Naive thymus-derived CD4-positive, alpha-beta T cell (primary cell): ENCODE measurements at regions of chr17 and their contacts with region 1.

Region 1: GRCh38 chr17:59106463-59107305 is at the start of gene TRIM37:
- DNase-seq: peak; percentile 96 to 100 (median 99)
- ATAC-seq: peak; percentile 98
- H3K4me3 ChIP-seq: peak within 1 kb of the TSS; percentile 69
- H3K4me3 Mint-ChIP-seq: peak within 1 kb of the TSS; percentile 80 to 97 (median 94)
- H3K27ac ChIP-seq: peak within 1 kb of the TSS; percentile 83
- H3K27ac Mint-ChIP-seq: peak within 1 kb of the TSS; percentile 63 to 98 (median 90)
- H3K4me1 ChIP-seq: peaks cover 11 to 26% of the 10 kb centered on the region in 2 donors
- H3K4me1 Mint-ChIP-seq: peaks cover 15 to 57% (median 39%) of the 10 kb centered on the region in 7 donors
- H3K27me3 ChIP-seq: no peaks in the 10 kb centered on the region
- H3K27me3 Mint-ChIP-seq: no peaks in the 10 kb centered on the region
- total RNA-seq, gene TRIM37: 13.1 to 25.2 (median 22.4) TPM

Region 2: GRCh38 chr17:58006924-58007780 is 1099.5 kb before region 1 on chr17 and contains the start of gene SRSF1:
- CTCF ChIA-PET with region 1: no interaction called
- POLR2A ChIA-PET with region 1: no interaction called
- intact Hi-C with region 1: loop called (anchors 2 kb)
- DNase-seq: peak; percentile 95 to 99 (median 98)
- ATAC-seq: peak; percentile 92
- H3K4me3 ChIP-seq: peak within 1 kb of the TSS; percentile 99
- H3K4me3 Mint-ChIP-seq: peak within 1 kb of the TSS; percentile 96 to 100 (median 99)
- H3K27ac ChIP-seq: peak within 1 kb of the TSS; percentile 93
- H3K27ac Mint-ChIP-seq: peak within 1 kb of the TSS; percentile 99 to 100 (median 99)
- H3K4me1 ChIP-seq: peaks cover 31 to 32% of the 10 kb centered on the region in 2 donors
- H3K4me1 Mint-ChIP-seq: peaks cover 33 to 60% (median 54%) of the 10 kb centered on the region in 7 donors
- H3K27me3 ChIP-seq: no peaks in the 10 kb centered on the region
- H3K27me3 Mint-ChIP-seq: peaks cover 0 to 3% (median 0%) of the 10 kb centered on the region in 5 donors
- total RNA-seq, gene SRSF1: 115 to 362 (median 249) TPM

Region 3: DNA sequence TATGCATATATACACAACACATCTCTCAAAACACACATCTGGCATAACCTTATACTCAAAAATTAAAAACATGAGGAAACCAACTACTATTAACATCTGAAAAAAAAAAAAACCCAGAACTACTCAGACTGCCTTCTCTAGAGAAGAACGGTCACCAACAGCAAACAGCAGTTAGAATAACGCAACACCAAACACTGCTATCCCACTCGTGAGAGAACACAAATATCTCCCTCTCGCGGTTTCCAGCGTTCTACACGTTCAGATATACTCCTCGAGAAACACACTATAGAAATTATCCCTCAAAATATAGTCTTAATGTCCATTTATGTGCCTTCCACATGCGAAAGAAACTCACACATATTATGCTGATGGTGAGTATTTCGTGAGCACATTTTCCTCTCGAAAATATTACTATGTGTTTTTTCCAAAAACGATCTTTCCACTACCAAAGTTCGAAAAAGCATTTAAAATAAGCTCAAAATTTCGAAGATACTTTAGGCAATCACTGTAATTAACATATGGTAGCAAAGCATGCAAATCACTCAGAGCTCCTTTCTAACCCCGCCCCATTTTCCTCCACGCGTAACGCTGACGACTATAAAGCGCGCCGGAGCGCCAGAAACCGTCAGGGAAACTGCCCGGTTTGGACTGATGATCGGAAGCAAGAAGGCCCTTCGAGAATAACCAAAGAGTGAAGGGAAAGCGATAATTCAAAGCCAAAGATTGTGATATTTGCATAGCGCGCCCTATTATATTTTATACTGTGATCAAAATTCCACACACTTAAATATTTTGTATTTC is 475.0 kb before region 1 on chr17:
- CTCF ChIA-PET with region 1: no interaction called
- POLR2A ChIA-PET with region 1: interaction called, 4 read pairs
- intact Hi-C with region 1: loop called (anchors 1 kb)
- DNase-seq: peak; percentile 74 to 95 (median 92)
- ATAC-seq: peak; percentile 90
- H3K4me3 ChIP-seq: peak overlapping the region; percentile 46
- H3K4me3 Mint-ChIP-seq: no peak overlapping the region
- H3K27ac ChIP-seq: peak overlapping the region; percentile 78
- H3K27ac Mint-ChIP-seq: no peak overlapping the region
- H3K4me1 ChIP-seq: peaks cover 6 to 12% of the 10 kb centered on the region in 2 donors
- H3K4me1 Mint-ChIP-seq: peaks cover 0 to 9% (median 5%) of the 10 kb centered on the region in 7 donors
- H3K27me3 ChIP-seq: no peaks in the 10 kb centered on the region
- H3K27me3 Mint-ChIP-seq: peaks cover 0 to 2% (median 0%) of the 10 kb centered on the region in 5 donors

Region 4: DNA sequence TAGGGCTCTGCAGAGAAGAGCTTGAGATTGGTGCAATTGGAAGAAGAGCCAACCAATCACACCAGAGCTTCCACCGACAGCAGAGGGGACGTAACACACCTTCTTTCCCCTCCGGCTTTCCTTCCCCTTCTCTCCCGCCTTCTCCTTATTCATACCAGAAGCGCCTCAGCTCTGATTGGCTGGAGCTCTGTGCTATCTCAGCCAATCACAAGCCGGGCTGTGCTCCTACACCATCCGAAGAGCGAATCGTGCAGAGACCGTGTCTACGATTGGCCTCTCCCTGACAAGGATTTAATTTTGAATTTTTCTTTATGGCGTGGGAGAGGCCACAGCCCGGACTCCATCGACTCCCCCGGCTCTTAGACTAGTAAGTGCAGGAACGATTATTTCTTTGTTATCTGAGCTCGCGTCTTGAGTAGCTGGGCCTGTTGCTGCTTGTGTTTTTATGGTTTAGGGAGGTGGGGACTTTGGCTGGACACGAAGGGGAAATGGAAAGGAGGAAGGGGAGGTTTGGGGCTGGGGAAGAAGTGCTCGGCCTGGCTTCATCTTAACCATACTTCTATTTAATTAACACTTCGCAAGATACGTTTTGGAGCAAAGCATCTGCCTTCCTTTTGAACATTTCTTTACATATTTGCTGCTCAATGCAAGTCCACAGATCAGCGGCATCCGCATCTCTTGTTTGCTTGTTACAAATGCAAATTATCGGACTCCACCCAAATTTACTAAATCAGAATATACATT is 48.9 kb after region 1 on chr17 and contains the start of gene PRR11:
- CTCF ChIA-PET with region 1: no interaction called
- POLR2A ChIA-PET with region 1: interaction called, 21 read pairs
- intact Hi-C with region 1: loop called (anchors 1 kb)
- DNase-seq: peak in 6 of 9 donors; percentile 62 to 99 (median 98)
- ATAC-seq: peak; percentile 91
- H3K4me3 ChIP-seq: peak within 1 kb of the TSS; percentile 89
- H3K4me3 Mint-ChIP-seq: no peak within 1 kb of the TSS
- H3K27ac ChIP-seq: peak within 1 kb of the TSS; percentile 75
- H3K27ac Mint-ChIP-seq: no peak within 1 kb of the TSS
- H3K4me1 ChIP-seq: peaks cover 10 to 13% of the 10 kb centered on the region in 2 donors
- H3K4me1 Mint-ChIP-seq: peaks cover 8 to 52% (median 36%) of the 10 kb centered on the region in 7 donors
- H3K27me3 ChIP-seq: no peaks in the 10 kb centered on the region
- H3K27me3 Mint-ChIP-seq: no peaks in the 10 kb centered on the region
- total RNA-seq, gene PRR11: 0.61 to 41.9 (median 1.00) TPM

Region 5: DNA sequence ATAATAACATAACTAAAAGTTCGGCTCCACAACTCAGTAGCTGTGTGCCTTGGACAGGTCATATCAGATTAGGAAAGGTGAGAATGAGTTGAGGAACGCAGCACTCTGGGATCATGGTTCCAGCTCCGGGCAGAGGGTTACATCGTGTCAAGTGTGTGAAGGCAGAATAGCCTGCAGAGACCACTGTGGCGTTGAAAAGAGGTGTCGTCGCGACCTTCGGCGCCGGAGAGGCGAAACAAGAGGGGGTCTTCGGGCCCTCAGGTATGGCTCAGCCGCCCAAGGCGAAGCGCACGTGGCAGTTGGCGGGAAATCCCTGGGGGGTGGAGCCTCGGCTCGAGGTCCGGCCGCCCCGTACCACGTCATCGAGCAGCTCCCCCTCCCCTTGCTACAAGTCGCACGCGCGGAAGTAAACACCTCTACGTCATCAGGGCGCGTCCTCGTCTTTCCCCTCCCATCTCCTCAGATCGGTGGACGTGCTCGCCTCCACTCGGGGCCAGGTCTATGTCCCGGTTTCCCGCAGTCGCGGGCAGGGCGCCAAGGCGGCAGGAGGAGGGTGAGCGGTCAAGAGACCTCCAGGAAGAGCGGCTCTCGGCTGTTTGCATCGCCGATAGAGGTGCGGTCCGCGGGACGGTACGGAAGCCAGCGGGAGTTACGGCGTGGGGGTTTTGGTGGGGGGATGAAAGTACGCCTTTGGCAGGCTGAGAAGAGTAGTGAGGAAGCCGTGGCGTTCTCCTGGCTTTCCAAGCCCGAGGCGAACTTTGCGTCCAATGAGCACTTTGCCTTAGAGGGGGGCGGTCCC is 458.7 kb after region 1 on chr17 and contains the start of gene DHX40:
- CTCF ChIA-PET with region 1: no interaction called
- POLR2A ChIA-PET with region 1: no interaction called
- intact Hi-C with region 1: loop called in 1 of 2 experiments (anchors 5 kb)
- DNase-seq: peak; percentile 80 to 95 (median 92)
- ATAC-seq: peak; percentile 97
- H3K4me3 ChIP-seq: peak within 1 kb of the TSS; percentile 92
- H3K4me3 Mint-ChIP-seq: peak within 1 kb of the TSS; percentile 97 to 100 (median 100)
- H3K27ac ChIP-seq: peak within 1 kb of the TSS; percentile 95
- H3K27ac Mint-ChIP-seq: peak within 1 kb of the TSS; percentile 98 to 100 (median 100)
- H3K4me1 ChIP-seq: peaks cover 10 to 14% of the 10 kb centered on the region in 2 donors
- H3K4me1 Mint-ChIP-seq: peaks cover 0 to 30% (median 23%) of the 10 kb centered on the region in 7 donors
- H3K27me3 ChIP-seq: no peaks in the 10 kb centered on the region
- H3K27me3 Mint-ChIP-seq: peaks cover 0 to 3% (median 0%) of the 10 kb centered on the region in 5 donors
- total RNA-seq, gene DHX40: 21.3 to 44.9 (median 29.4) TPM

Region 6: DNA sequence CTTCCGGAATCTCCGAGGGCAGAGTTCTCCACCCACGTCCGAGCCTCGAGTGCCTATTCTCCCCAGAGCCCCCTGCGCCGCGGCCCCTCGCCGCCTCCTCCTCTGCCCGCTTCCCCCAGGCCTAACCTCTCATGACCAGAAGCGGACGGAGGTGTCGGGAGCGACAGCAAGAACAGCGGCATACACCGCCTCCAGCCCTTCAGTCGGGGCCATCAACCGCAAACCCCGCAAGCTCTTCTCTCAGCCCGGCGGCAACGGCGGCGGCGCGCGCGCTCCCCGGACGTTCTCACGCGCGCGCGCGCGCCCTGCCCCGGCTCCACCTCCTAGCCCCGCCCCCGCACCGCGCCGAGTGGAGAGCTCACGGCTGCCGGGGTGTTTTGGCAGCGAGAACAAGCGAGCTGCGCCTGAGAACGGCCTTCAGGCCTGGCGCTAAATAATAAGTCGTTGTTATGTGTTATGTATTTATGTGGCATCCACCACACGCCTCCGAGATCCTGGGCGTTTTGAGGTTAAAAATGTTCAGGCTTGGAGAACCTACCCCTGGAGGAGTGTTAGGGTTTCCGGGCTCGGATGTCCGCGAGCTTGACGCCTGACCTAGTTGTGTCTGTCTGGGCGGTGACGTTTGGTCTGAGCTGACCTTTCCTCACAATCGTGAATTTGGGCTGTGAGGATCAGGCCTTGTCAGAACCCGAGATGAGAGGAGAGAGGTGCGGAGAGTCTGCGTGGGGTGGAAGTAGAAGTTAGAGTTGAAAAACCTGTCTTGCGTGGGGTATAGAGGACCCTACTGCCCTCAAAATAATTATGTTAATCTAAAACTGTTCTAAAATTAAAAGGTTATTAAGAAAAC is 858.0 kb after region 1 on chr17 and contains the start of gene RNFT1:
- CTCF ChIA-PET with region 1: no interaction called
- POLR2A ChIA-PET with region 1: no interaction called
- intact Hi-C with region 1: loop called in 1 of 2 experiments (anchors 5 kb)
- DNase-seq: peak; percentile 78 to 97 (median 88)
- ATAC-seq: peak; percentile 97
- H3K4me3 ChIP-seq: peak within 1 kb of the TSS; percentile 92
- H3K4me3 Mint-ChIP-seq: peak within 1 kb of the TSS; percentile 86 to 99 (median 94)
- H3K27ac ChIP-seq: peak within 1 kb of the TSS; percentile 84
- H3K27ac Mint-ChIP-seq: peak within 1 kb of the TSS; percentile 88 to 99 (median 94)
- H3K4me1 ChIP-seq: peaks cover 16 to 18% of the 10 kb centered on the region in 2 donors
- H3K4me1 Mint-ChIP-seq: peaks cover 16 to 32% (median 23%) of the 10 kb centered on the region in 7 donors
- H3K27me3 ChIP-seq: no peaks in the 10 kb centered on the region
- H3K27me3 Mint-ChIP-seq: peaks cover 0 to 5% (median 0%) of the 10 kb centered on the region in 5 donors
- total RNA-seq, gene RNFT1: 22.8 to 45.8 (median 33.1) TPM